ENCODE measurements at regions of chrX and their contacts with region 1.

Region 1: DNA sequence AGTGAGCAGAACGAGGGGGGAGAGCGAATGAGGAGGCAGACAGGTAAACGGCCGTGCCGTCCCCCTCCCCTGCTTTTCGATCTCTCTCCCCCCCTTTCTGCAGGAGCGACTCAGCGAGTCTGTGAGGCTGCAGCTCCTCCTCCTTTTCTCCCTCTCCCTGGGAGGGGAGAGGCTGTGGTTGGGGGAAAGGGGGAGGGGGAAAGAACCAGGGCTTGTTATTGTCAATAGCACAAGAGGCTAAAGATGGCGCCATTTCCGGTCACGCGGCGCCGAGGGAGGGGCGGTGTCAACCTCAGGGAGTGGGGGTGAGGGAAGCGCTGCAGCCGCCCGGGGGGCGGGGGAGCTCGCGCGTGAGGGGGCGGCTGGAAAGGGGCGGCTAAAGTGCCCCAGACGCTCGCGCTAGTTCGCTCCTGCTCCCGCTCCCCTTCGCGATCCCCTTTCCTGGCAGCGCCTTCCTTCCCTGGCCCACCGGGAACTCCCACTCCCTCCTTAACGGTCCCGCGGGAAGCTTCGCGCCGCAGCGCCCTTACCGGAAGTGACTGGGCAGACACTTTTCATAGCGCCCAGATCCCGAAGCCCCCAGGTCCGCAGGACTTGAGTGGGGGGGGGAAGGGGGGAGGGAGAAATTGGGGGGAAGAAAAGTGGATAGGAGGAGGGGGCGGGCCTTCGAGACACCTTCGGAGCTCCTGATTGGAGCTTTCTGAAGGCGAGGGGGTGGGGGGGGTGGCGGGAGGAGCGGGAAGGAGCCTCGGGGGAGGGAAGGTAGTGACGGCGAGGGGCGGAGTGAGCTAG is at the start of gene CUL4B:
- DNase-seq: peak; percentile 91 to 95
- H3K4me3 ChIP-seq: peak within 1 kb of the TSS; percentile 72
- H3K4me3 Mint-ChIP-seq: peak within 1 kb of the TSS; percentile 95
- H3K27ac Mint-ChIP-seq: peak within 1 kb of the TSS; percentile 98
- H3K4me1 ChIP-seq: peaks cover 20% of the 10 kb centered on the region
- H3K4me1 Mint-ChIP-seq: peaks cover 8% of the 10 kb centered on the region
- H3K27me3 ChIP-seq: no peaks in the 10 kb centered on the region
- H3K27me3 Mint-ChIP-seq: no peaks in the 10 kb centered on the region
- CTCF ChIP-seq: no peak
- total RNA-seq, gene CUL4B: 41.0 and 47.7 TPM in 2 replicates

Region 2: DNA sequence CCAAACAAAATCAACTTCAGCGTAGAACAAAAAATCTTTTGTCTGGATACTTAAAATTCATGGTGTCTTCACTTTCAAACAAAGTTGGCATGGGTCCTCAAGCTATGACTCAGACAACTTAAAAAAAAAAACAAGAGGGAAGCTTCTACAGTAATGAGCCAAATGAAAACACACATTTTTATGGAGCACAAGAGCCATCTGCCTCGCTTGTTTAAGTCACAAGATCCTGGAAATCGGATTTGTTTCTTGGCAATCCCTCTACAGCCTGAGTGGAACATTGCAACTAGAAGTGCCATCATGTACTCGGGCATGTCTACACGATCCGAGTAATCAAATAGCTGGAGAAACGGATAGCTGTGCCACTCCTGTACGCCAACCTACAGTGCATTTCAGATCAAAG is 114.5 kb before region 1 on chrX:
- CTCF ChIA-PET with region 1: no interaction called
- POLR2A ChIA-PET with region 1: no interaction called
- intact Hi-C with region 1: no loop called
- DNase-seq: no peak
- H3K4me3 ChIP-seq: no peak overlapping the region
- H3K4me3 Mint-ChIP-seq: no peak overlapping the region
- H3K27ac Mint-ChIP-seq: no peak overlapping the region
- H3K4me1 ChIP-seq: no peaks in the 10 kb centered on the region
- H3K4me1 Mint-ChIP-seq: no peaks in the 10 kb centered on the region
- H3K27me3 ChIP-seq: no peaks in the 10 kb centered on the region
- H3K27me3 Mint-ChIP-seq: no peaks in the 10 kb centered on the region
- CTCF ChIP-seq: no peak

Region 3: GRCh38 chrX:120549483-120550452 is 11.3 kb before region 1 on chrX:
- CTCF ChIA-PET with region 1: no interaction called
- POLR2A ChIA-PET with region 1: interaction called, 7 read pairs
- intact Hi-C with region 1: loop called (anchors 1 kb)
- DNase-seq: peak; percentile 35 to 53
- H3K4me3 ChIP-seq: 0 out of 2 replicates have a peak overlapping the region, but pooled peaks have one; percentile 5
- H3K4me3 Mint-ChIP-seq: peak overlapping the region; percentile 68
- H3K27ac Mint-ChIP-seq: peak overlapping the region; percentile 97
- H3K4me1 ChIP-seq: peaks cover 34% of the 10 kb centered on the region
- H3K4me1 Mint-ChIP-seq: peaks cover 10% of the 10 kb centered on the region
- H3K27me3 ChIP-seq: no peaks in the 10 kb centered on the region
- H3K27me3 Mint-ChIP-seq: no peaks in the 10 kb centered on the region
- CTCF ChIP-seq: no peak

Region 4: DNA sequence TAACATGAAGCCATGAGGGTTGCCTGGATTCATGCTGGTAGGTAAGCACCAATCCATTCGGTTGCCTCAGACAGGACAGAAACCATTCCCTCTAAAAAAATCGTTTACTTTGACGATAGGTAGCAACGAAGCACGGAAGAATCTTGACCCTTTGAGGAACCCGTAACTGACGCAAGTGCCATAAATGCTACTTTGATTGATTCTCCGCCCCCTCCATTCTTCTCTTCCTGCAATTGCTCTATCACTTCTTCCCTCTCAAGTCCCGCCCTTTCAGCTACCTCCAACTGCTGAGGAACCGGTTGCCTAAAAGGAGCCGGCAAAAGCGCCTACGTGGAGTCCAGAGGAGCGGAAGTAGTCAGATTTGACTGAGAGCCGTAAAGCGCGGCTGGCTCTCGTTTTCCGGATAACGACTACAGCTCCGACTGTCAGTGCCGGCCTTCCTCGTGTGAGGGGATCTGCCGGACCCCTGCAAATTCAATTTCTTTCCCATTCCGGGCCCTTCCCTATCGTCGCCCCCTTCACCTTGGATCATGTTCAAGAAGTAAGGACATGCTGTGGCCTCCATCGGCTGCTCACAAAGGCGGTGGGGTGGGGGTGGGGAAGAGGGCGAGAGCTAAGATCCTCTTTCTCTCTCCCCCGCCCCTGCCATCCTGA is 42.8 kb after region 1 on chrX and contains the start of gene MCTS1:
- CTCF ChIA-PET with region 1: interaction called, 5 read pairs
- POLR2A ChIA-PET with region 1: interaction called, 28 read pairs
- intact Hi-C with region 1: loop called (anchors 1 kb)
- DNase-seq: peak; percentile 88 to 95
- H3K4me3 ChIP-seq: peak within 1 kb of the TSS; percentile 67
- H3K4me3 Mint-ChIP-seq: peak within 1 kb of the TSS; percentile 99
- H3K27ac Mint-ChIP-seq: peak within 1 kb of the TSS; percentile 98
- H3K4me1 ChIP-seq: no peaks in the 10 kb centered on the region
- H3K4me1 Mint-ChIP-seq: no peaks in the 10 kb centered on the region
- H3K27me3 ChIP-seq: no peaks in the 10 kb centered on the region
- H3K27me3 Mint-ChIP-seq: no peaks in the 10 kb centered on the region
- CTCF ChIP-seq: no peak
- total RNA-seq, gene MCTS1: 50.5 and 55.8 TPM in 2 replicates

Measured in Caco-2 (cell line).